ENCODE measurements at regions of chr7 and their contacts with region 1.

Region 1: GRCh38 chr7:5677538-5678294 is 103.7 kb downstream of the RNF216 start:
- DNase-seq: peak; percentile 84
- H3K4me3 ChIP-seq: peak overlapping the region in 1 of 3 experiments; percentile 17
- H3K27ac ChIP-seq: peak overlapping the region; percentile 75
- H3K4me1 ChIP-seq: peaks cover 17% of the 10 kb centered on the region
- H3K27me3 ChIP-seq: no peaks in the 10 kb centered on the region
- CTCF ChIP-seq: peak; percentile 77 to 81
- POLR2A ChIP-seq: no peak

Region 2: GRCh38 chr7:5237286-5237685 is 440.4 kb before region 1 on chr7:
- CTCF ChIA-PET with region 1: interaction called, 12 read pairs
- POLR2A ChIA-PET with region 1: interaction called, 3 read pairs
- dilution Hi-C with region 1: no loop called
- intact Hi-C with region 1: loop called (anchors 5 kb)
- DNase-seq: no peak
- H3K4me3 ChIP-seq: no peak overlapping the region
- H3K27ac ChIP-seq: no peak overlapping the region
- H3K4me1 ChIP-seq: peaks cover 2% of the 10 kb centered on the region
- H3K27me3 ChIP-seq: no peaks in the 10 kb centered on the region
- CTCF ChIP-seq: no peak
- POLR2A ChIP-seq: no peak

Region 3: DNA sequence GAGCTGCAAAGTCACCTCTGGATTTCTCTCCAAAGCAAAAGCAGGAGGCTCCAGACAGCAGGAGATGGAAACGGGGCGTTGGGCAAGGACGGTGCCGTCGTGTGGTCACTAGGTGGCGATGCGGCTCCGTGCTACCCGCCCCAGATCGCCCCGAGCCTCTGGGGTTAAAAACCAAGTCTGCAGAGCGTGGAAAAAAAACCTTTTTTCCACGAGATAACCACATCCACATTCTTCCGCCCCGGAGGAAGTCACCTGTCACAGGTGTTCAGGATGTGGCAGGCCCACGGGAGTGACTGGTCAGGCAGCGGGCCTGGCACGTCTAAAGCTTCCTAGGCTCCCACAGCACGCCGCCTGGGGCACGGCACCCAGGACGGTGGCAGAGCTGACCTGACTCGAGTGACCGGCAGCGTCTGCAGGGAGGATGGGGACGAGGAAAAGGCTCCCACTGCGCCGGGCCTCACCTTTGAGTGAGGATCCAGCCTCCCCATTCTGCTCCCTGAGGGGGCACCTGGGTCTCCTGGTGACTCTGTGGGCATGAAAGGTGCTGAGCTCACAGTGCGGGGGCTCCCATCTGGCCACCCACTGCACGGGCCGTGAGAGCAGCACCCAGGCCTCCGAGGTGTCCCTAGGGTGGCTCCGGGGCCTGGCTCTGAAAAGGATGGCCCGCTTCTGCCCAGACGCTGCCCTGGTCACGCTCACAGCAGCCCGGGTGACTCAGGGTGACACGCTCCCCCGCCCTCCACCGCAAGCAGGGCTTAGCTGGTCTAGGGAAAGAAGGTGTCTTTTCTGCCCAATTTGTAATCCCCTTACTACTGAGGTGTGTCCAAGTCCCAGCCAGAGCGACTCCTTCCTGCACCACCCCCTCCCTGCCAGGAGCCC is 182.8 kb before region 1 on chr7:
- CTCF ChIA-PET with region 1: interaction called, 129 read pairs
- POLR2A ChIA-PET with region 1: no interaction called
- dilution Hi-C with region 1: no loop called
- intact Hi-C with region 1: loop called (anchors 1 kb)
- DNase-seq: peak; percentile 72
- H3K4me3 ChIP-seq: no peak overlapping the region
- H3K27ac ChIP-seq: no peak overlapping the region
- H3K4me1 ChIP-seq: peaks cover 4% of the 10 kb centered on the region
- H3K27me3 ChIP-seq: no peaks in the 10 kb centered on the region
- CTCF ChIP-seq: peak; percentile 79 to 96
- POLR2A ChIP-seq: no peak

Region 4: GRCh38 chr7:5557920-5558401 is 119.8 kb before region 1 on chr7:
- CTCF ChIA-PET with region 1: interaction called, 34 read pairs
- POLR2A ChIA-PET with region 1: interaction called, 3 read pairs
- dilution Hi-C with region 1: no loop called
- intact Hi-C with region 1: no loop called
- DNase-seq: no peak
- H3K4me3 ChIP-seq: no peak overlapping the region
- H3K27ac ChIP-seq: no peak overlapping the region
- H3K4me1 ChIP-seq: peaks cover 20% of the 10 kb centered on the region
- H3K27me3 ChIP-seq: no peaks in the 10 kb centered on the region
- CTCF ChIP-seq: no peak
- POLR2A ChIP-seq: no peak

Region 5: GRCh38 chr7:5607951-5608656 is 69.6 kb before region 1 on chr7:
- CTCF ChIA-PET with region 1: interaction called, 11 read pairs
- POLR2A ChIA-PET with region 1: no interaction called
- dilution Hi-C with region 1: no loop called
- intact Hi-C with region 1: no loop called
- DNase-seq: no peak
- H3K4me3 ChIP-seq: no peak overlapping the region
- H3K27ac ChIP-seq: no peak overlapping the region
- H3K4me1 ChIP-seq: peaks cover 5% of the 10 kb centered on the region
- H3K27me3 ChIP-seq: no peaks in the 10 kb centered on the region
- CTCF ChIP-seq: no peak
- POLR2A ChIP-seq: peak; percentile 37

Region 6: DNA sequence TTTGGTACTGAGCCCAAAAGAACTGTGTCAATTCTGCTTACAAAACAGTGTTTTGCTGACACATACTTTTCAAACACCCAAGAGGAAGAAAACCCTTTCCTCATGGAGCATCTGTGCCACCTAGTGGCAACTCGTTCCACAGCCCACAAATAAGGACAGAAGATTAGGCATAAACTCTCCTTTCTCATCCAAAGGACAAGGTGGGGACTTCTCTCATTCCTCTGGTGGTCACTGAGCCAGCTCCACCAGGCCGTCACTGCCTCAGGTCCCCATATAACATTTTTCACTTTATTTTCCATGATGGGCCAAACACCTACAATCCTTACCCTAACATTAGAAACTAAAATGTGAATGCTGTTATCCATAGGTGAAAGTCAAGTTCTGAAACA is 26.8 kb after region 1 on chr7:
- CTCF ChIA-PET with region 1: interaction called, 15 read pairs
- POLR2A ChIA-PET with region 1: no interaction called
- dilution Hi-C with region 1: no loop called
- intact Hi-C with region 1: loop called (anchors 1 kb)
- DNase-seq: peak; percentile 87
- H3K4me3 ChIP-seq: no peak overlapping the region
- H3K27ac ChIP-seq: no peak overlapping the region
- H3K4me1 ChIP-seq: no peaks in the 10 kb centered on the region
- H3K27me3 ChIP-seq: no peaks in the 10 kb centered on the region
- CTCF ChIP-seq: peak; percentile 80 to 81
- POLR2A ChIP-seq: no peak

Region 7: GRCh38 chr7:5780801-5781496 is 103.2 kb after region 1 on chr7:
- CTCF ChIA-PET with region 1: no interaction called
- POLR2A ChIA-PET with region 1: no interaction called
- dilution Hi-C with region 1: no loop called
- intact Hi-C with region 1: no loop called
- DNase-seq: peak; percentile 46
- H3K4me3 ChIP-seq: peak overlapping the region; percentile 73 to 93 (median 73)
- H3K27ac ChIP-seq: peak overlapping the region; percentile 30
- H3K4me1 ChIP-seq: peaks cover 3% of the 10 kb centered on the region
- H3K27me3 ChIP-seq: no peaks in the 10 kb centered on the region
- CTCF ChIP-seq: no peak
- POLR2A ChIP-seq: no peak

Measured in endothelial cell of umbilical vein (primary cell).